GM12878 (cell line): ENCODE measurements at regions of chr1 and their contacts with region 1.

Region 1: DNA sequence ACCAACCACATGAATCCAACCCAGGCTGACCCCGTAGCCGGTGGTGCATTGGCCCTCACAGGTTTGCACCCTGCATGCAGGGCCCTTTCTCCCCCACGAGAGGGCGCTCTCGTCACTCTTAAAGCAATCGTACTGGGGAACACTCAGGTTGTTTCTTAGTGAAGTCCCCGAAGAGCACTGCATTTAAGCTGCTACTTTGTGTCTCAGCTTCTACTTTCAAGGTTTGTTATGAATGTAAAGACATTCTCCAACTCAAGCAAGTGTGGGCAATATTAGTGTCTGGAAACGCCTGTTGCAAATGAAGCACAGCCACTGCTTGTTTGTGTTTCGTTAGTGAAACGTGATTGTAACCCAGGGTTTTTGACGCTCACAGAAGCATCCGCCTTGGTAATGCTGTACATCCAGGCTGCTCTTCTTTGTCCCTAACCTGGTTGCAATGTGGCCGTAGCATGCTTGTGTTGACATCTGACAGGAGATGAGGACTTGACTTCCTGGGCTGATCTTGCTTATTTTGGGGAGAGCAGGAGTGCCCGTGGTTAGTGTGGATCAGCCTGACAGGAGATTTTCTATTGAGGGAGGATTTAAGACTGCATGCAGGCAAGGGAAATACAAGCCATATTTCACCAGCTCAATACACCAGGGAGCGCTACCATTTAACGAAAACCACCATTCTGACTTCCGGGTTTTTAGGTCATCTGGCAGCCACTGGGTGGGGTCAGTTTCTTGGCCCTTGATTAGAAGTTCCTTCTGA is 79.8 kb downstream of the ST6GALNAC3 start:
- DNase-seq: peak; percentile 32
- ATAC-seq: peak; percentile 98
- H3K4me3 ChIP-seq: peak overlapping the region; percentile 48; the same call in 1 of the 2 replicates
- H3K27ac ChIP-seq: no peak overlapping the region
- H3K4me1 ChIP-seq: no peaks in the 10 kb centered on the region
- H3K27me3 ChIP-seq: no peaks in the 10 kb centered on the region; a peak in 1 of 4 replicates
- CTCF ChIP-seq: peak; percentile 97 to 99 (median 97)
- EP300 ChIP-seq: no peak
- POLR2A ChIP-seq: no peak
- RAD21 ChIP-seq: peak; percentile 89

Region 2: GRCh38 chr1:75991497-75992114 is 162.8 kb before region 1 on chr1:
- CTCF ChIA-PET with region 1: interaction called, 23 read pairs
- POLR2A ChIA-PET with region 1: no interaction called
- RAD21 ChIA-PET with region 1: interaction called, 9 read pairs
- SMC1A ChIA-PET with region 1: interaction called, 12 read pairs
- in situ Hi-C with region 1: no loop called
- intact Hi-C with region 1: loop called (anchors 5 kb)
- DNase-seq: no peak
- ATAC-seq: peak; percentile 86
- H3K4me3 ChIP-seq: no peak overlapping the region
- H3K27ac ChIP-seq: no peak overlapping the region
- H3K4me1 ChIP-seq: no peaks in the 10 kb centered on the region
- H3K27me3 ChIP-seq: no peaks in the 10 kb centered on the region
- CTCF ChIP-seq: peak; percentile 75 to 78 (median 77)
- EP300 ChIP-seq: no peak
- POLR2A ChIP-seq: no peak
- RAD21 ChIP-seq: peak; percentile 72

Region 3: GRCh38 chr1:76133977-76134376 is 20.4 kb before region 1 on chr1:
- CTCF ChIA-PET with region 1: no interaction called
- POLR2A ChIA-PET with region 1: no interaction called
- RAD21 ChIA-PET with region 1: no interaction called
- SMC1A ChIA-PET with region 1: no interaction called
- in situ Hi-C with region 1: no loop called
- intact Hi-C with region 1: no loop called
- DNase-seq: no peak
- ATAC-seq: no peak
- H3K4me3 ChIP-seq: no peak overlapping the region
- H3K27ac ChIP-seq: no peak overlapping the region
- H3K4me1 ChIP-seq: no peaks in the 10 kb centered on the region
- H3K27me3 ChIP-seq: no peaks in the 10 kb centered on the region
- CTCF ChIP-seq: no peak
- EP300 ChIP-seq: no peak
- POLR2A ChIP-seq: no peak
- RAD21 ChIP-seq: no peak

Region 4: DNA sequence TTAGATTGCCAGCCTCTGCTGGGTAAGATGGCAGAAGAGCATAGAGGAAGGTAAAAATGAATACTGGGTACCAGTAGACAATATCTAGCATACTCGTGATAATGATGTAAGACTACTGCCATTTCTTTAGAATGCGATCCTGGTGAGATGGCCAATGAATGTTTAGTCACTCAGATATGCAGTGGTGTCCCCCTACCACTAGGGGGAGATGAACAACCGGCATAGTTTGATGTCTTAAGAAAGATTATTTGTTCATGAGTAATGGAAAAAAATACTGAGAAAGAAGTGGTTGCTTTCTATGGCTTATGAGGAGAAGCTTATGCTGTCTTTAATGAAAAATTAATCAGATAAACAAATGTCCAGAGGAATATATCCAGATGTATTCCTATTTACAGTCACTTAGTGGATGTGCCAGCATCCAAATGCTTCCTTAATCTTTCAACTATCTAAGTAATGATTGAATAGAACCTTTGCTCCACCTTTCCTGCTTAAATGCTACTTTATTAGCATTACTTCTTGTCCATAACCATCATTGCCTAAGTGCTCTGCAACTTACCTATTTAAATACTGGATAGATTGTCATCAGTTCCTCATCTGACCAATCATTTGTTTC is 176.7 kb after region 1 on chr1:
- CTCF ChIA-PET with region 1: interaction called, 10 read pairs
- POLR2A ChIA-PET with region 1: no interaction called
- RAD21 ChIA-PET with region 1: interaction called, 7 read pairs
- SMC1A ChIA-PET with region 1: interaction called, 8 read pairs
- in situ Hi-C with region 1: no loop called
- intact Hi-C with region 1: loop called (anchors 2 kb)
- DNase-seq: no peak
- ATAC-seq: peak; percentile 90
- H3K4me3 ChIP-seq: no peak overlapping the region
- H3K27ac ChIP-seq: no peak overlapping the region
- H3K4me1 ChIP-seq: no peaks in the 10 kb centered on the region
- H3K27me3 ChIP-seq: no peaks in the 10 kb centered on the region
- CTCF ChIP-seq: peak; percentile 83 to 89 (median 89)
- EP300 ChIP-seq: no peak
- POLR2A ChIP-seq: no peak
- RAD21 ChIP-seq: peak; percentile 85

Region 5: GRCh38 chr1:77120950-77121349 is 966.6 kb after region 1 on chr1:
- CTCF ChIA-PET with region 1: interaction called, 23 read pairs
- POLR2A ChIA-PET with region 1: no interaction called
- RAD21 ChIA-PET with region 1: interaction called, 14 read pairs
- SMC1A ChIA-PET with region 1: interaction called, 29 read pairs
- in situ Hi-C with region 1: no loop called
- intact Hi-C with region 1: loop called (anchors 1 kb)
- DNase-seq: no peak
- ATAC-seq: no peak
- H3K4me3 ChIP-seq: no peak overlapping the region
- H3K27ac ChIP-seq: no peak overlapping the region
- H3K4me1 ChIP-seq: no peaks in the 10 kb centered on the region
- H3K27me3 ChIP-seq: no peaks in the 10 kb centered on the region
- CTCF ChIP-seq: no peak
- EP300 ChIP-seq: no peak
- POLR2A ChIP-seq: no peak
- RAD21 ChIP-seq: no peak

Region 6: DNA sequence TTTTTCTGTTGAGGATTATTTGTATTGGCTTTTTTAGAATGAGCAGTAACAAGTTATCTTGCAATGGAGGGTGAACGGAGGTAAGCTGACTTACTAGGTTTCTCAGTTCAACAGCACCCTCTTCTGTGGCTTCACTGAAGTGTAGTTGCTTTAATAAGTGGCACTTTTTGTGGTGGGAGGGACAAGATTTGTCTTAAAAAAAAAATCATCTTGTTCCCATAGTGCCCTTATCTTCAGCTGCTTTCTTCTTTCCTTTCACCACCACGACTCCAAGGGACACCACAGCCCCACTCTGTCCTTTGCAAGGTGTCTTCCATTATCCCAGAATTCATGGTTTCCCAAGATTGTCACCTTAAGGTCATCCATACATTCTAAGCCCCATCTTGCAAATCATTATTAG is 971.9 kb after region 1 on chr1:
- CTCF ChIA-PET with region 1: interaction called, 23 read pairs
- POLR2A ChIA-PET with region 1: no interaction called
- RAD21 ChIA-PET with region 1: interaction called, 14 read pairs
- SMC1A ChIA-PET with region 1: interaction called, 29 read pairs
- in situ Hi-C with region 1: no loop called
- intact Hi-C with region 1: loop called (anchors 1 kb)
- DNase-seq: no peak
- ATAC-seq: peak; percentile 91
- H3K4me3 ChIP-seq: no peak overlapping the region
- H3K27ac ChIP-seq: no peak overlapping the region
- H3K4me1 ChIP-seq: no peaks in the 10 kb centered on the region
- H3K27me3 ChIP-seq: no peaks in the 10 kb centered on the region
- CTCF ChIP-seq: peak; percentile 46 to 76 (median 49); a peak in 5 of 6 replicates
- EP300 ChIP-seq: no peak
- POLR2A ChIP-seq: no peak
- RAD21 ChIP-seq: peak; percentile 81

Region 7: GRCh38 chr1:78101514-78101913 is 1947.1 kb after region 1 on chr1:
- CTCF ChIA-PET with region 1: no interaction called
- POLR2A ChIA-PET with region 1: no interaction called
- RAD21 ChIA-PET with region 1: no interaction called
- SMC1A ChIA-PET with region 1: no interaction called
- in situ Hi-C with region 1: loop called (anchors 10 kb)
- intact Hi-C with region 1: no loop called
- DNase-seq: no peak
- ATAC-seq: no peak
- H3K4me3 ChIP-seq: no peak overlapping the region
- H3K27ac ChIP-seq: no peak overlapping the region
- H3K4me1 ChIP-seq: no peaks in the 10 kb centered on the region
- H3K27me3 ChIP-seq: no peaks in the 10 kb centered on the region
- CTCF ChIP-seq: no peak
- EP300 ChIP-seq: no peak
- POLR2A ChIP-seq: no peak
- RAD21 ChIP-seq: no peak